Activated naive CD4-positive, alpha-beta T cell treated with anti-CD3 and anti-CD28 coated beads, Interleukin-2, amount 10 ng/mL, durations not matched to agents 7 days and 5 days (primary cell): ENCODE measurements at regions of chr11 and their contacts with region 1.

Region 1: DNA sequence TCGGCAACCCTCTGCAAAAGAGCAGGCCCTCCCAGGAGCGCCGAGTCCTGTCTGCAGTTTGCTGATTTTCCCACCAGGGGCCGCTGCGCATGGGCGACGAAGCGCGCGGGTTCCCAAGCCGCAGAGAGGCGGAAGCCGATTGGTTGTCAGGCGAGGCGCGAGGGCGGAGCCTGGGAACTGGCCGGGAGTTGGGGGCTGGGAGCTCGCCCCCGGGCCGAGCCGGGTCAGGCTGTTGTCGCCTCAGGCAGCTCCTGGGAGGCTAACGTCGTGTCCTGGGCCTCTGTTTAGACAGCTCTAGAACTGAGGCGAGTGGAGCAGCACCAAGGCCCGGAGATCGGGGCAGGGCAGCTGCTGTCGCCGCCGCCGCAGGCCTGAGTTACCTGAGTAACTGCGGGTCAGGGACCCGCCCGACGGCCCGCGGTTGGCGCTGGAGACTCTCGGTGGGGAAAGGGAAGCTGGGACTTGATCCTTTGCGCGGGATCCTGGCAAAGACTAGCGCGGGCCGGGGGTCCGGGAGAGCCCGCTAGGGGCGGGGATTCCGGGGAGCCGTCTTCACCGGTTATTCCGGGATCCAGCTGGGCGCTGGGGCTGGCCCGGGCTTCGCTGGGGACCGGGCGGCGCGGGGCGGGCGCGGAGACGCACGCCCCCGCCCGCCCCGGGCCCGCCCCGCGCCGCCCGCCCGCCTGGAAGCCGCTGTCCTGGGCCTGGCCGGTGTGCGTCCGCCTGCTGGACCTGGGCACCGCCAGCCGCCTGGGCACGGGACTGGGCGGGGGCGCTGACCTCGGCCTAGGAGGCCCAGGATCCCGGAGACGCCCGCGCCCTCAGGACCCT is at the start of gene STIM1:
- DNase-seq: peak; percentile 97
- H3K4me3 Mint-ChIP-seq: peak within 1 kb of the TSS; percentile 98
- H3K27ac Mint-ChIP-seq: peak within 1 kb of the TSS; percentile 98
- H3K4me1 Mint-ChIP-seq: peaks cover 60% of the 10 kb centered on the region
- H3K27me3 Mint-ChIP-seq: peaks cover 6% of the 10 kb centered on the region

Region 2: DNA sequence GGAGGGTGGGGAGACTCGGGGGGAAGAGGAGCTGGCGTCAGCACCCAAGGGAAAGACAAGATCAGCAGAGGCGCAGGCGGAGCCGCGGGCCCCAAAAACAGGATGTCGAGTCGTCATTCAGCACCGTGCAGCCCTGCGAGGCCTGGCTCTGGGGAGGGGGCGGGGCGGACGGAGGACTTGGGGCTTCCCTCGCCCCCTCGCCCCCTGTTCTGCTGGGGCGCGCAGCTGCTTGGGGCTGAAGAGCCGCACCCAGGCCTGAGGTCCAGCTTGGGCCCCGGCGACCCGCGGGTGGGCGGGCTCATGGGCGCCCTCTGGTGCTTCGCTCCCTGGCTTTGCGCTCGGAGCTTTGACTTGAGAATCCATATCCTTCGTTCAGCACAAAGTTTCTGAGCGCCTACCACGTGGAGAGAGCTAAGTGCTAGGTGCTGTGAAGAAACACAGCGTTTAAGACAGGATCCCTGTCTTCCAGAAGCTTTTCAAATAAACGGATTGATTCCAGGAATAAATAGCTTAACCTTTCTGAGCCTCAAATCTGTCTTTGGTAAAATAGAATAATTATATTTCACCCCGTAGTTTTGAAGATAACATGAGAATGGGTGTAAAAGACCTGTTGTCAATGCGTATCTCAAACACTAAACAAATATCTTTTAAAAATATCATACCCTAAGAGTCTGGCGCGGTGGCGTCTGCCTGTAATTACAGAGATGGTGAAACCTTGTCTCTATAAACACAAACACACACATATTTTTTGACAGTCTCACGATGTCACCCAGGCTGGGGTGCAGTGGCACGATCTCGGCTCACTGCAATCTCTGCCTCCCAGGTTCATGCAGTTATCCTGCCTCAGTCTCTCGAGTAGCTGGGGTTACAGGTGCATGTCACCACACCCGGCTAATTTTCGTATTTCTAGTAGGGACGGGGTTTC is 13.5 kb before region 1 on chr11:
- CTCF ChIA-PET with region 1: interaction called, 179 read pairs
- DNase-seq: peak; percentile 95
- H3K4me3 Mint-ChIP-seq: peak overlapping the region; percentile 82
- H3K27ac Mint-ChIP-seq: peak overlapping the region; percentile 99
- H3K4me1 Mint-ChIP-seq: peaks cover 56% of the 10 kb centered on the region
- H3K27me3 Mint-ChIP-seq: no peaks in the 10 kb centered on the region

Region 3: DNA sequence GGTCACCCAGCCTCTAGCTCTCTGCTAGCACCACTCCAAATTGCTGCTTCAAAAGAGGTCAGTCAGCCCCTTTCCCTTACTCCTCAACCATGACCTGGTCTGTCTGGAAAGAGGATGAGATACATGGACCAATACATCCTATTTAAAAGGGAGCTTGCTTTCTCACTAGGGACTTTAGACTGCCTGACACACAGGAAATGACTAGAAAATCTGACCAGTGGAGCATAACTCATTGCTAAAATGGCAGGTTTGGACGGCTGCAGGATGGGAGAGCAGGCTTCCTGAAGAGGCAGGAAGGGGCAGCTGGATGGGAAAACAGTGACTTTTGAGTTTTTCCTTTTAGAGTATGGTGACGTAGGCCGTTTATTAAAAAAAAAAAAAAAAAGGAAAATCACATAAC is 25.5 kb after region 1 on chr11:
- CTCF ChIA-PET with region 1: interaction called, 22 read pairs
- DNase-seq: no peak
- H3K4me3 Mint-ChIP-seq: no peak overlapping the region
- H3K27ac Mint-ChIP-seq: no peak overlapping the region
- H3K4me1 Mint-ChIP-seq: peaks cover 57% of the 10 kb centered on the region
- H3K27me3 Mint-ChIP-seq: no peaks in the 10 kb centered on the region

Region 4: GRCh38 chr11:3927133-3927796 is 72.1 kb after region 1 on chr11:
- CTCF ChIA-PET with region 1: interaction called, 17 read pairs
- DNase-seq: no peak
- H3K4me3 Mint-ChIP-seq: no peak overlapping the region
- H3K27ac Mint-ChIP-seq: no peak overlapping the region
- H3K4me1 Mint-ChIP-seq: peaks cover 10% of the 10 kb centered on the region
- H3K27me3 Mint-ChIP-seq: no peaks in the 10 kb centered on the region

Region 5: GRCh38 chr11:3959015-3959919 is 104.1 kb after region 1 on chr11:
- CTCF ChIA-PET with region 1: interaction called, 20 read pairs
- DNase-seq: no peak
- H3K4me3 Mint-ChIP-seq: no peak overlapping the region
- H3K27ac Mint-ChIP-seq: no peak overlapping the region
- H3K4me1 Mint-ChIP-seq: peaks cover 50% of the 10 kb centered on the region
- H3K27me3 Mint-ChIP-seq: no peaks in the 10 kb centered on the region

Region 6: GRCh38 chr11:3984896-3985295 is 129.7 kb after region 1 on chr11:
- CTCF ChIA-PET with region 1: interaction called, 43 read pairs
- DNase-seq: peak; percentile 60
- H3K4me3 Mint-ChIP-seq: no peak overlapping the region
- H3K27ac Mint-ChIP-seq: no peak overlapping the region
- H3K4me1 Mint-ChIP-seq: peaks cover 74% of the 10 kb centered on the region
- H3K27me3 Mint-ChIP-seq: no peaks in the 10 kb centered on the region